Naive thymus-derived CD4-positive, alpha-beta T cell (primary cell): ENCODE measurements at regions of chr1 and their contacts with region 1.

Region 1: DNA sequence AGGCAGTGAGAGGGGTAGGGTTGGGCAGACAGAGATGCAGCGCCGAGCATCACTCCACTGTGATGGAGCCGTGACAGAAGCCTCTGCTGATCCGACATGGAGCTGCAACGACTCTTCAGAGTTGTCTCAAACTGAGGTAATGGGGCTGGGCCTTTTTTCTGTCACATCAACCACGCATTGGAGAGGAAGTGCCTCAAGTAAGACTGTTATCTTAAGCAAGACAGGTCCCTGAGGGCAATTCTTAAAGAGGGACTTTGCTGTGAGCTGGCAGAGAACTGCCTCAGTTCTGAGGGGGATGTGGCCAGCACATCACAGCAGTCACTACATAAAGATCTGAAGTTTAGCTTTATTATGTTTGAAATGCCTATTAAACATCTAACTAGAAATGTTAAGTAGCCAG is 54.4 kb upstream of the BCL9 start:
- DNase-seq: no peak
- ATAC-seq: no peak
- H3K4me3 ChIP-seq: no peak overlapping the region
- H3K4me3 Mint-ChIP-seq: no peak overlapping the region
- H3K27ac ChIP-seq: no peak overlapping the region
- H3K27ac Mint-ChIP-seq: no peak overlapping the region
- H3K4me1 ChIP-seq: no peaks in the 10 kb centered on the region
- H3K4me1 Mint-ChIP-seq: no peaks in the 10 kb centered on the region
- H3K27me3 ChIP-seq: peaks cover 0 to 4% of the 10 kb centered on the region in 2 donors
- H3K27me3 Mint-ChIP-seq: peaks cover 8 to 18% (median 14%) of the 10 kb centered on the region in 5 donors

Region 2: DNA sequence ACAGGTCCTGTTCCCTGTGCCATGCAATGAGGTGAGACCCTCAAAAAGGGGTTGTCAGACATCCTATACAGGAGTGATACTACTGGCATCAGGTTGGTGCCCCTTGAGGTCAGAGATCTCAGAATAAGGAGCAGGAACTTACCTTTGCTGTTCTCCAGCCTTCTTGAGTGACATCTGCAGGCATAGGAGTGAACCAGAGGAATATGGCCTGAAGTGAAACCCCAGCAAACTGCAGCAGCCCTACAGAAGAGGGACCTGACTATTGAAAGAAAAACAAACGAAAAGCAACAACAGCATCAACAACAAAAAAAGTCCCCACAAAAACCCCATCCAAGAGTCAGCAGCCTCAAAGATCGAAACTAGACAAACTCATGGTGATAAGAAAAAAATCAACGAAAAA is 169.9 kb before region 1 on chr1:
- CTCF ChIA-PET with region 1: no interaction called
- POLR2A ChIA-PET with region 1: no interaction called
- intact Hi-C with region 1: no loop called
- DNase-seq: no peak
- ATAC-seq: no peak
- H3K4me3 ChIP-seq: no peak overlapping the region
- H3K4me3 Mint-ChIP-seq: no peak overlapping the region
- H3K27ac ChIP-seq: no peak overlapping the region
- H3K27ac Mint-ChIP-seq: no peak overlapping the region
- H3K4me1 ChIP-seq: no peaks in the 10 kb centered on the region
- H3K4me1 Mint-ChIP-seq: no peaks in the 10 kb centered on the region
- H3K27me3 ChIP-seq: no peaks in the 10 kb centered on the region
- H3K27me3 Mint-ChIP-seq: peaks cover 0 to 11% (median 8%) of the 10 kb centered on the region in 5 donors

Region 3: DNA sequence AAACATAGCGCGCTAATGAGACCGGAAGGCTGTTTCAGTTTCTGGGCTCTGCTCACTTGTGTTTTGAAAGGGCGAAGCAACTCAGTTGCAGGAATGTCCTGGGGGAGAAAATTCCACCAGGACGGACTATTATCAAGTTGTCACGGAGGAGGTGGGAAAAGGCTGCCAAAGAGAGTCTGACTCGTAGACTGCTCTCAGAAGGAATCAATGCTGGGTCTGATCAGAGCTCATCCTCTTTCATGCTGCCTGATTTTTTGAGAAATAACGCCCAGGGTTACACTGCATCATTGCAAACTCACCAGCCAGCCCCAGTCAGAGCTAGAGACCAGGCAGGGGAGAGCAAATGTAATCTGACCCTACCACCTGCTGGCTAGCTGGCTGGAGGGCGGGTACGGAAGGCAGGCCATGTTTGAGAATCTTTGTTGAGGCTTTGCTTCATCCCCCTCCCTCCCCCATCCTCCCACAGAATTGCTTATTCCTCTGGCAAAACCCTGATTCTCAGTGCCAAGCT is 18.0 kb after region 1 on chr1:
- CTCF ChIA-PET with region 1: no interaction called
- POLR2A ChIA-PET with region 1: no interaction called
- intact Hi-C with region 1: loop called in 1 of 2 experiments (anchors 1 kb)
- DNase-seq: no peak
- ATAC-seq: no peak
- H3K4me3 ChIP-seq: no peak overlapping the region
- H3K4me3 Mint-ChIP-seq: no peak overlapping the region
- H3K27ac ChIP-seq: no peak overlapping the region
- H3K27ac Mint-ChIP-seq: no peak overlapping the region
- H3K4me1 ChIP-seq: no peaks in the 10 kb centered on the region
- H3K4me1 Mint-ChIP-seq: peaks cover 0 to 1% (median 0%) of the 10 kb centered on the region in 7 donors
- H3K27me3 ChIP-seq: no peaks in the 10 kb centered on the region
- H3K27me3 Mint-ChIP-seq: peaks cover 0 to 10% (median 4%) of the 10 kb centered on the region in 5 donors